Posterior vena cava (tissue), 2 donors: ENCODE measurements at regions of chr3 and their contacts with region 1.

Region 1: GRCh38 chr3:183022936-183023516 is 42.7 kb upstream of the DCUN1D1 start:
- DNase-seq: no peak

Region 2: DNA sequence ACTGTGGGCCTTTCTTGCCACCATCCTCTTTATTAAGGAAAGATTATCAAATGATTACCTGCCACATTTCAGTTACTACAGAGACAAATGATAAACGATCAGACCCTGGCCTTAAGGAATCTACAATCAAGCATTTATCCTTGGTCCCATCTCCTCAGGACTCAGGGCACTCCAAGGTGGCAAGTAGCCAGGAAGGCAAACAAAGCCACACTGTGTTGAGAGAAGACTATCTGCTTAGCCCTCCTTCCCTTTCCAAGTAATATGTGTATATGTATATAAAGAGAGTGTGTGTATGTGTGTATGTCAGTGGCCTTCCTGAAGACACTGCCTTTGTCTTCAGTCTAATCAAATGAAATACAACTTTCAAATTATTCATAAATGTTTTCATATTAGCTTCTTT is 719.9 kb before region 1 on chr3:
- intact Hi-C with region 1: loop called in 1 of 2 experiments (anchors 5 kb)
- DNase-seq: no peak